Head of caudate nucleus (tissue), 42 donors: ENCODE measurements at regions of chr19 and their contacts with region 1.

Region 1: DNA sequence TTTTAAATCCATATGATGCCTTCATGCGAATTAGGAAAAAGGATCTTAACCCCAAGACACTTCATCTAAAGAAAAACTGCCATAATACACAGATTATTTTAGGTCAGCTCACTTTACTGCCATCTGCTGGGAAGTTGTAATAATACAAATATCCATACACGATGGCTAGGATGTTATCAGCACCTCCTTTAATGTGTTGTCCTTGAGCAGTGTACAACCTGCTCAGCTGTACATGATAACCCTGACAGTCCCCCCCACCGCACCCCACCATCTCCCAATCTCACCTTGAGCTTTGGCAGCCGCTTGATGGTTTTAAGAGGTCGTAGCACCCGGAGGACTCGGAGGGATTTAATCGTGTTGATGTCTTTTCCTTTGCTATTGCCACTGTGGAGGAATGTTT is 112.2 kb downstream of the IER2 start:
- DNase-seq: no peak

Region 2: DNA sequence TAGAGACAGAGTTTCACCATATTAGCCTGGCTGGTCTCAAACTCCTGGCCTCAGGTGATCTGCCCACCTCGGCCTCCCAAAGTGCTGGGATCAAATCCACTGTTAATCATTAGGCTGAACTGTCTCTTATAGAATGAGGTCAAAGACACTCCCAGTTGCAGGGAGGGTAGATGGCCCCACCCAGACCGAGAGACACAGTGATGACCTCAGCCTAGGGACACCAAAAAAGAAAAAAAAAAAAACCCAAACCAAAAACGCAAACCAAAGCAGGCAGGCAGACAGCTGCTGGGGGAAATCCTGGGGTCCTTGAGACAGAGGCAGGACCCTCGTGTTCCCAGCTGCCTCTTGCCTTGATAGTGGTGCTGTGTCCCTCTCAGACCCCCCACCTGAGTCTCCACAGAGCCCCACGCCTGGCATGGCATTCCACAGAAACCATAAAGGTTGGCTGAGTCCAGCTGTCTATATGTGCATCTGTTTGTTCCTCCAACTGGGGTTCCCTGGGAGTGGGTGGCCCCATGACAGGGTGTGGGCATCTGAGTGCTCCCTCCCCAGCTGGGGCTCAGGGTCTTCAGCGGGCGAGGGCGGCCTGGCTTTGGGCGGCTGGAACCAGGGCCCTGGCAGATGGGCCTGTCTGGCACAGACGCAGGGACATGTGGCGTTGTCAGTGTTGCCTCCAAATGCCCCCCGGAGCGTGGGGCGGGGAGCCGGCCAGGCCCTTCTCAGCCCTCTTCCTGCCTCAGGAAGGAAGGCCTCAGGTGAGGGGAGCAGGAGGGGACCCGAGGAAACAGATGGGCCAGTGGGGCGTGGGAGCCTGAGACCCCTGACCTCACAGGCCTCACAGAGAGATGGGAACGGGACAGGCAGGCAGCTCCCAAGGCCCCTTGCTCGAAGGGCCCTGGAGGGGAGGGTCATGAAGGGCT is 287.9 kb before region 1 on chr19:
- intact Hi-C with region 1: loop called (anchors 5 kb)
- DNase-seq: no peak